ENCODE measurements at regions of chr16 and their contacts with region 1.

Region 1: GRCh38 chr16:29729116-29729521 is 16.7 kb downstream of the C16orf54 start:
- DNase-seq: no peak
- H3K4me3 Mint-ChIP-seq: no peak overlapping the region
- H3K27ac Mint-ChIP-seq: no peak overlapping the region
- H3K4me1 Mint-ChIP-seq: peaks cover 22% of the 10 kb centered on the region
- H3K27me3 Mint-ChIP-seq: peaks cover 11% of the 10 kb centered on the region

Region 2: GRCh38 chr16:29745853-29746345 is 16.8 kb after region 1 on chr16 and contains the start of gene C16orf54:
- intact Hi-C with region 1: loop called (anchors 1 kb)
- DNase-seq: peak; percentile 92
- H3K4me3 Mint-ChIP-seq: peak within 1 kb of the TSS; percentile 98
- H3K27ac Mint-ChIP-seq: peak within 1 kb of the TSS; percentile 94
- H3K4me1 Mint-ChIP-seq: peaks cover 41% of the 10 kb centered on the region
- H3K27me3 Mint-ChIP-seq: no peaks in the 10 kb centered on the region
- total RNA-seq, gene C16orf54: 18.0 and 18.5 TPM in 2 replicates